Heart left ventricle (tissue), 16 donors: ENCODE measurements at regions of chrX and their contacts with region 1.

Region 1: DNA sequence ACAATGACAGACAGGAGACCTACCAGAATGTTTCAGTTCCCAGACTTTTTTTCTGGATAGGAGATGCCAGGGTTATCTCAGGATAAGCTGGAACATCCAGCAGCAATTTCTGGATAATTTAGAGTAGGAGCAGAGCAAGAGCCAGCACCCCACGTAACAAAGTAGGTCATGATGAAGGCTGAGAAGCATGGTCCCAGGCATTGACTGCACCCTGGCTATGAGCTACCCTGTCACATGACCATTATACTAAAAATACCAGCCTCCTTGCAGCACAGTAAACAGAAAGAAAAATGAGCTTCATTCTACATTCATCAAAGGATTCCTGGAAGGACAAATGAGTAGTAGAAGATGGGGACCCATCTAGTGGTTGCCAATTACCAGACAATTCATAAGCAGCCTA is 247.4 kb upstream of the AR start:
- DNase-seq: no peak
- ATAC-seq: peak in 1 of 4 donors; percentile 42
- H3K4me3 ChIP-seq: no peak overlapping the region
- H3K27ac ChIP-seq: no peak overlapping the region
- H3K4me1 ChIP-seq: peaks cover 0 to 10% (median 0%) of the 10 kb centered on the region in 12 donors
- H3K27me3 ChIP-seq: peaks cover 0 to 4% (median 0%) of the 10 kb centered on the region in 9 donors
- CTCF ChIP-seq: no peak
- POLR2A ChIP-seq: no peak

Region 2: DNA sequence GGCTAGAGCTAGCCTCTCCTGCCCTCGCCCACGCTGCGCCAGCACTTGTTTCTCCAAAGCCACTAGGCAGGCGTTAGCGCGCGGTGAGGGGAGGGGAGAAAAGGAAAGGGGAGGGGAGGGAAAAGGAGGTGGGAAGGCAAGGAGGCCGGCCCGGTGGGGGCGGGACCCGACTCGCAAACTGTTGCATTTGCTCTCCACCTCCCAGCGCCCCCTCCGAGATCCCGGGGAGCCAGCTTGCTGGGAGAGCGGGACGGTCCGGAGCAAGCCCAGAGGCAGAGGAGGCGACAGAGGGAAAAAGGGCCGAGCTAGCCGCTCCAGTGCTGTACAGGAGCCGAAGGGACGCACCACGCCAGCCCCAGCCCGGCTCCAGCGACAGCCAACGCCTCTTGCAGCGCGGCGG is 247.4 kb after region 1 on chrX and contains the start of gene AR:
- intact Hi-C with region 1: loop called in 1 of 10 experiments (anchors 10 kb)
- DNase-seq: peak; percentile 66 to 81 (median 76)
- ATAC-seq: peak; percentile 52 to 82 (median 74)
- H3K4me3 ChIP-seq: peak within 1 kb of the TSS; percentile 3 to 63 (median 54)
- H3K27ac ChIP-seq: peak within 1 kb of the TSS in 10 of 12 donors; percentile 43 to 79 (median 66)
- H3K4me1 ChIP-seq: peaks cover 0 to 5% (median 0%) of the 10 kb centered on the region in 12 donors
- H3K27me3 ChIP-seq: peaks cover 0 to 57% (median 0%) of the 10 kb centered on the region in 9 donors
- CTCF ChIP-seq: no peak
- POLR2A ChIP-seq: peak in 1 of 2 donors; percentile 30
- total RNA-seq, gene AR: 9.5 to 30.1 (median 20.1) TPM